Kidney (tissue), 22 donors: ENCODE measurements at regions of chr12 and their contacts with region 1.

Region 1: DNA sequence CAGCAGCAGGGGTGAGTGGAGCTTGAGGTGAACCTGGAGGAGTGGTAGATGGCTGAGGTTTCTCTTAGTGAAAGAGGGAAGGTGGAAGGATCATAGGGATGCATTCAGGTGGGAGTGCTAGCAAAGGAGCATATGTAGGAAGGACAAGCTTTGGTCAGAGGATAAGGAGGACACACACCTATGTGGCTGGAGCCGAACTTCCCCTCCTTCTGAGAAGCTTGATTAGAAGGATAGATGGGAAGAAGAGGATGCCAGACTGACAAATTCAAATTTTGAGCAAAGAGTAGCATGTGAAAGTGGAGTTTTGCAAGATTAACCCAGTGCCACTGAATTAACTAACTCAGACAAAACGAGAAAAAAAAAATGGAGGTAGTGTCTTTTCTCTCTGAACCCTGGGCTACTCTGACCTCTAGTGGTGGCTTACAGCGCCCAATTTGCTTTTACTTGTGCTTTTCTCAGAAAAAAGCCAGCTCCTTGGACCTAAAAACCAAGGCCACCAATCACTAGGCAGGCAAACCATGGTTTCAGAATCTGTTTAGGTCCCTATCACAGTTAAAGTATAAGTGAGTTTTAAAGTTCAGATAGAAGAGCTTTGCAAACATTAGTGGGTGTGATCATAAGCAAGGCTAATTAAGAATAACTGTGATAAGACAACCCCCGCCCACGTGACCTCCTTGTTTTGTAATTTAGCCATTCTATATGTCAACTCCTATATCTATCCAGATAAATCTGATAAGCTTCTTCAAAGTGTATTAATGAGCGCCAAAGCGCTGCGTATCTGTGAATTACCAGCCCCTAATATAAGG is 15.5 kb downstream of the EMP1 start:
- DNase-seq: peak in 4 of 5 donors; percentile 75 to 93 (median 88)
- H3K4me3 ChIP-seq: no peak overlapping the region
- H3K27ac ChIP-seq: no peak overlapping the region
- H3K4me1 ChIP-seq: peaks cover 0 to 8% (median 6%) of the 10 kb centered on the region in 3 donors
- H3K27me3 ChIP-seq: no peaks in the 10 kb centered on the region
- CTCF ChIP-seq: peak; percentile 82

Region 2: DNA sequence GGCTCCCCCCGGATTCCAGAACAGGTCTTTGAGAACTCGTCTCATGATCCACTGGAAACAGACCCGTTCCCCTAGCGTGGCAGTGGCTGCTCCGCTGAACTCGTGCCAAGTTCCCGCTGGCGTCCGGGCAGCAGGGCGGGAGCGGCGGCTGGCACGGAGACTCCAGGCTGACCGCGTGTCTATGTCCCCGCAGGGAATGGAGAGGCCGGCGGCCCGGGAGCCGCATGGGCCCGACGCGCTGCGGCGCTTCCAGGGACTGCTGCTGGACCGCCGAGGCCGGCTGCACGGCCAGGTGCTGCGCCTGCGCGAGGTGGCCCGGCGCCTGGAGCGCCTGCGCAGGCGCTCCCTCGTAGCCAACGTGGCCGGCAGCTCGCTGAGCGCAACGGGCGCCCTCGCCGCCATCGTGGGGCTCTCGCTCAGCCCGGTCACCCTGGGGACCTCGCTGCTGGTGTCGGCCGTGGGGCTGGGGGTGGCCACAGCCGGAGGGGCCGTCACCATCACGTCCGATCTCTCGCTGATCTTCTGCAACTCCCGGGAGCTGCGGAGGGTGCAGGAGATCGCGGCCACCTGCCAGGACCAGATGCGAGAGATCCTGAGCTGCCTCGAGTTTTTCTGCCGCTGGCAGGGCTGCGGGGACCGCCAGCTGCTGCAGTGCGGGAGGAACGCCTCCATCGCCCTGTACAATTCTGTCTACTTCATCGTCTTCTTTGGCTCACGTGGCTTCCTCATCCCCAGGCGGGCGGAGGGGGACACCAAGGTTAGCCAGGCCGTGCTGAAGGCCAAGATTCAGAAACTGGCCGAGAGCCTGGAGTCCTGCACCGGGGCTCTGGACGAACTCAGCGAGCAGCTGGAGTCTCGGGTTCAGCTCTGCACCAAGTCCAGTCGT is 425.1 kb before region 1 on chr12:
- intact Hi-C with region 1: no loop called
- DNase-seq: peak; percentile 83 to 94 (median 92)
- H3K4me3 ChIP-seq: peak overlapping the region; percentile 62 to 79 (median 75)
- H3K27ac ChIP-seq: peak overlapping the region; percentile 90 to 95
- H3K4me1 ChIP-seq: peaks cover 0 to 9% (median 8%) of the 10 kb centered on the region in 3 donors
- H3K27me3 ChIP-seq: no peaks in the 10 kb centered on the region
- CTCF ChIP-seq: peak; percentile 19

Region 3: GRCh38 chr12:12916135-12916944 is 295.7 kb before region 1 on chr12:
- intact Hi-C with region 1: loop called (anchors 5 kb)
- DNase-seq: peak; percentile 89 to 93 (median 92)
- H3K4me3 ChIP-seq: peak overlapping the region in 1 of 3 donors; percentile 10
- H3K27ac ChIP-seq: peak overlapping the region in 1 of 2 donors; percentile 15
- H3K4me1 ChIP-seq: peaks cover 0 to 8% (median 0%) of the 10 kb centered on the region in 3 donors
- H3K27me3 ChIP-seq: no peaks in the 10 kb centered on the region
- CTCF ChIP-seq: peak; percentile 99

Region 4: GRCh38 chr12:13099066-13099843 is 112.8 kb before region 1 on chr12:
- intact Hi-C with region 1: loop called (anchors 5 kb)
- DNase-seq: peak in 1 of 5 donors; percentile 62
- H3K4me3 ChIP-seq: no peak overlapping the region
- H3K27ac ChIP-seq: peak overlapping the region; percentile 69 to 70
- H3K4me1 ChIP-seq: peaks cover 17 to 32% (median 19%) of the 10 kb centered on the region in 3 donors
- H3K27me3 ChIP-seq: no peaks in the 10 kb centered on the region
- CTCF ChIP-seq: no peak